Ascending aorta (tissue), 2 donors: ENCODE measurements at regions of chr1 and their contacts with region 1.

Region 1: DNA sequence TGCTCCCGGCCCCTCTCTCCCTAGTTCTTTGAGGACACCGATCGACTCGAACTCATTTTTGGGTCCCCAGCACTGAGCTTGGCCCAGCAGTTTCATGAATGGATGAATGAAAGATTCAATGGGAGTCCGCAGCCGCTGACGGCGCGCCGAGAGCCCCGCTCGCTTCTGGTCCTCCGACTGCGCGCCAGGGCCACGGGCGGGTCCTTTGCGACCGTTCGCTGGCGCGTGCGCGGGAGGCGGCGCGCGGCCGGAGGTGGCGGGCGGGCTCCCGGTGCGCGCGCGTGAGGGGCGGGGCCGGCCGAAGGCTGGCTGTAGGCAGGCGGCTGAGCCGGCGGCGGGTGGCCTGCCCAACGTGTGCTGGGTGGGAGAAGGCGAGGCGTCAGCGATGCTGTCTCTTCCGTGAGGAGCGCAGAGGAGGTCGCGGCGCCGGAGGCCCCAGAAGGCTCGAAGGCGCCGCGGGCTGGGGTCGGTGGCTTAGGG is at the start of gene MAST2:
- DNase-seq: peak; percentile 45 to 93
- H3K4me3 ChIP-seq: peak within 1 kb of the TSS; percentile 76 to 84
- H3K27ac ChIP-seq: peak within 1 kb of the TSS; percentile 79 to 91
- H3K4me1 ChIP-seq: peaks cover 11 to 13% of the 10 kb centered on the region in 2 donors
- H3K27me3 ChIP-seq: no peaks in the 10 kb centered on the region
- CTCF ChIP-seq: no peak
- total RNA-seq, gene MAST2: 61.0 TPM

Region 2: DNA sequence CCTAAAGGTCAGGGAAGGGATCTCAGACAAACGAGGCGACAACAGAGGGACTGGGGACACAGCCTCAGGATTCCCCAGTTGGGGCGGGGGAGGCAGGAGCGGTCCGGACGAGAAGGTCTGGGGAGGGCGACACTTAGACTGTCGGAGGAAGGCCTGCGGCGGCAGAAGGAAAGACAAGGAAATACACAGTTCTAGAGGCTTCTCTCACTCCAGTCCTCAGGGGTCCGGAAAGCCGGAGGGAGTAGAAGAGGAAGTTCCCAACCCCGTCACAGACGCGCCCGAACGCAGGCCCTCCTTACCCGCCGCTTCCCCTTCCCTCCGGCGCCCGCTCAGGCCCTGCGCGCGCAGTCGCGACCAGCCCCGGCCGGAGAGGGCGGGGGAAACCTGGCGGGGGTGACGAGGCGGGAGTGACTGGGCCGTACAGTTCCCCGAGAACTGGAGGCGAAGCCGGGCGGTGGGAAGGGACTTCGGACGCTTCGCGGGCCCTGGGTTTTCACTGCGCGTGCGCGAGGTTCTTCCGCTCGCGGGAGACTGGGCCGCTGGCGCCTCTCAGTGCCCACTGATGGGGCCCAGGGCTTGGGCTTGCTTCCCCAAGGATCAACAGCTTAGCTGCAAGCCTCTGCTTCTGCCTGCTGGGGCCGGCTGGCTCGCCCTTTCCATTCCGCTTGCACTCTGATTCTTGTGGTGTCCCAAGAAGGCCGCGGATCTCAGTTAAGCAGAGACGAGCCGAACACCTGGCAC is 52.9 kb before region 1 on chr1 and contains the start of gene IPP:
- intact Hi-C with region 1: loop called (anchors 1 kb)
- DNase-seq: peak; percentile 84 to 98
- H3K4me3 ChIP-seq: peak within 1 kb of the TSS; percentile 68 to 82
- H3K27ac ChIP-seq: peak within 1 kb of the TSS; percentile 90 to 98
- H3K4me1 ChIP-seq: peaks cover 3 to 13% of the 10 kb centered on the region in 2 donors
- H3K27me3 ChIP-seq: no peaks in the 10 kb centered on the region
- CTCF ChIP-seq: peak in 2 of 3 experiments; percentile 8 to 33
- total RNA-seq, gene IPP: 5.5 TPM

Region 3: GRCh38 chr1:45884700-45885099 is 81.4 kb after region 1 on chr1:
- intact Hi-C with region 1: loop called (anchors 5 kb)
- DNase-seq: no peak
- H3K4me3 ChIP-seq: no peak overlapping the region
- H3K27ac ChIP-seq: no peak overlapping the region
- H3K4me1 ChIP-seq: no peaks in the 10 kb centered on the region
- H3K27me3 ChIP-seq: no peaks in the 10 kb centered on the region
- CTCF ChIP-seq: no peak

Region 4: GRCh38 chr1:45913183-45913683 is 109.9 kb after region 1 on chr1:
- intact Hi-C with region 1: loop called (anchors 2 kb)
- DNase-seq: peak; percentile 42 to 87
- H3K4me3 ChIP-seq: peak overlapping the region in 1 of 2 donors; percentile 37
- H3K27ac ChIP-seq: peak overlapping the region; percentile 83 to 87
- H3K4me1 ChIP-seq: peaks cover 2 to 7% of the 10 kb centered on the region in 2 donors
- H3K27me3 ChIP-seq: no peaks in the 10 kb centered on the region
- CTCF ChIP-seq: no peak

Region 5: GRCh38 chr1:46102769-46103476 is 299.6 kb after region 1 on chr1:
- intact Hi-C with region 1: no loop called
- DNase-seq: no peak
- H3K4me3 ChIP-seq: no peak overlapping the region
- H3K27ac ChIP-seq: no peak overlapping the region
- H3K4me1 ChIP-seq: no peaks in the 10 kb centered on the region
- H3K27me3 ChIP-seq: no peaks in the 10 kb centered on the region
- CTCF ChIP-seq: no peak